ENCODE measurements at regions of chr4 and their contacts with region 1.

Region 1: GRCh38 chr4:95124906-95125504 is 367.2 kb downstream of the BMPR1B start:
- DNase-seq: peak in 1 of 2 donors; percentile 5
- ATAC-seq: peak in 3 of 8 donors; percentile 38 to 68 (median 50)
- H3K4me3 ChIP-seq: no peak overlapping the region
- H3K27ac ChIP-seq: no peak overlapping the region
- H3K4me1 ChIP-seq: peaks cover 0 to 7% (median 0%) of the 10 kb centered on the region in 9 donors
- H3K27me3 ChIP-seq: peaks cover 0 to 3% (median 0%) of the 10 kb centered on the region in 7 donors
- CTCF ChIP-seq: peak in 8 of 9 donors; percentile 20 to 63 (median 44)

Region 2: GRCh38 chr4:94610145-94610544 is 514.9 kb before region 1 on chr4:
- intact Hi-C with region 1: loop called in 1 of 10 experiments (anchors 10 kb)
- DNase-seq: no peak
- ATAC-seq: no peak
- H3K4me3 ChIP-seq: no peak overlapping the region
- H3K27ac ChIP-seq: no peak overlapping the region
- H3K4me1 ChIP-seq: peaks cover 0 to 14% (median 5%) of the 10 kb centered on the region in 9 donors
- H3K27me3 ChIP-seq: no peaks in the 10 kb centered on the region
- CTCF ChIP-seq: no peak

Region 3: GRCh38 chr4:94621491-94622080 is 503.4 kb before region 1 on chr4:
- intact Hi-C with region 1: loop called in 5 of 10 experiments (anchors 5 to 10 kb)
- DNase-seq: no peak
- ATAC-seq: no peak
- H3K4me3 ChIP-seq: no peak overlapping the region
- H3K27ac ChIP-seq: no peak overlapping the region
- H3K4me1 ChIP-seq: peaks cover 0 to 15% (median 6%) of the 10 kb centered on the region in 9 donors
- H3K27me3 ChIP-seq: no peaks in the 10 kb centered on the region
- CTCF ChIP-seq: peak; percentile 64 to 87 (median 79)

Region 4: GRCh38 chr4:94629837-94630236 is 495.2 kb before region 1 on chr4:
- intact Hi-C with region 1: loop called in 3 of 10 experiments (anchors 5 to 10 kb)
- DNase-seq: no peak
- ATAC-seq: no peak
- H3K4me3 ChIP-seq: no peak overlapping the region
- H3K27ac ChIP-seq: no peak overlapping the region
- H3K4me1 ChIP-seq: peaks cover 0 to 14% (median 6%) of the 10 kb centered on the region in 9 donors
- H3K27me3 ChIP-seq: no peaks in the 10 kb centered on the region
- CTCF ChIP-seq: no peak

Region 5: GRCh38 chr4:94757192-94758139 is 367.5 kb before region 1 on chr4 and contains the start of gene BMPR1B:
- intact Hi-C with region 1: loop called in 1 of 10 experiments (anchors 10 kb)
- DNase-seq: no peak
- ATAC-seq: peak in 6 of 8 donors; percentile 19 to 74 (median 46)
- H3K4me3 ChIP-seq: peak within 1 kb of the TSS; percentile 18 to 57 (median 49)
- H3K27ac ChIP-seq: no peak within 1 kb of the TSS
- H3K4me1 ChIP-seq: peaks cover 0 to 15% (median 4%) of the 10 kb centered on the region in 9 donors
- H3K27me3 ChIP-seq: peaks cover 0 to 93% (median 67%) of the 10 kb centered on the region in 7 donors
- CTCF ChIP-seq: peak in 1 of 9 donors; percentile 16
- total RNA-seq, gene BMPR1B: 1.4 to 7.8 (median 3.0) TPM

Region 6: GRCh38 chr4:95023110-95023509 is 101.9 kb before region 1 on chr4:
- intact Hi-C with region 1: no loop called
- DNase-seq: no peak
- ATAC-seq: no peak
- H3K4me3 ChIP-seq: no peak overlapping the region
- H3K27ac ChIP-seq: no peak overlapping the region
- H3K4me1 ChIP-seq: no peaks in the 10 kb centered on the region
- H3K27me3 ChIP-seq: no peaks in the 10 kb centered on the region
- CTCF ChIP-seq: no peak